K562 (cell line): ENCODE measurements at regions of chr17 and their contacts with region 1.

Region 1: DNA sequence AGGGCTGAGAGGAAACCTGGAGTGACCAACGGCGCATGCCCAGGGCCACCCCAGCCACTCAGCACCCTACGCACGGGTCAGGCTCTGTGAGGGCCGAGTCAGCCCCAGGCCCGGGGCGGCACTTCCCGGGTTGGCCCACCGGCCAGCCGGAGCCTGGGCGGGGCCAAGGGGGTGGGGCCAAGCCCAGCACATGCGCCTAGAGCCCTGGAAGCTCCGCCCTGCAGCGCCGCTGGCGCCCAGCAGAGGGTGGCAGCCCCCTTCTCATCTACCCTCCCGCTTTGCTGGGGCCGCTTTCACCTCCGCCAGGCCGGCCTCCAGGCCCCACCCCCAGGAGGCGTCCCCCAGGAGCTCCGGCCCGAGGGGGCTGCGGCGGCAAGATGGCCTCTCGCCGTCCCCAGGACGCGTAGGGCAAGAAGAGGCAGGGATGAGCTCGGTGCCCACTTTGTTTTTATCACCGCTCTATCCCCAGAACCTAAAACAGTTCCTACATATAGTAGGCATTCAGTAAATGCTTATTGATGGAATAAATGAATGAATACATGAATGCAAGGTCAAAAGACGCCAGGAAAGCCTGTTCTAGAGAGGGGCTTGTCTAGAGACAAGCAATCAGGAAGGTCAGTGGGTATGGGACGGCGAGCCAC is 31.3 kb downstream of the MYO18A start:
- DNase-seq: peak; percentile 94 to 97 (median 96)
- ATAC-seq: peak; percentile 92
- H3K4me3 ChIP-seq: peak overlapping the region; percentile 27
- H3K27ac ChIP-seq: peak overlapping the region; percentile 69
- H3K4me1 ChIP-seq: peaks cover 49 to 63% of the 10 kb centered on the region in 2 experiments
- H3K27me3 ChIP-seq: no peaks in the 10 kb centered on the region
- CTCF ChIP-seq: peak; percentile 95 to 99 (median 98)
- EP300 ChIP-seq: no peak
- POLR2A ChIP-seq: no peak
- RAD21 ChIP-seq: peak; percentile 98

Region 2: GRCh38 chr17:29180034-29180787 is 31.3 kb after region 1 on chr17 and contains the start of gene MYO18A:
- CTCF ChIA-PET with region 1: interaction called, 5 read pairs
- POLR2A ChIA-PET with region 1: interaction called, 6 read pairs
- in situ Hi-C with region 1: loop called (anchors 5 kb)
- intact Hi-C with region 1: loop called (anchors 1 kb)
- DNase-seq: peak; percentile 81 to 86 (median 84)
- ATAC-seq: peak; percentile 72
- H3K4me3 ChIP-seq: peak within 1 kb of the TSS; percentile 49
- H3K27ac ChIP-seq: peak within 1 kb of the TSS; percentile 97
- H3K4me1 ChIP-seq: peaks cover 30 to 45% of the 10 kb centered on the region in 2 experiments
- H3K27me3 ChIP-seq: no peaks in the 10 kb centered on the region
- CTCF ChIP-seq: peak; percentile 87 to 99 (median 98)
- EP300 ChIP-seq: no peak
- POLR2A ChIP-seq: no peak
- RAD21 ChIP-seq: peak; percentile 80 to 92
- polyA plus RNA-seq, gene MYO18A: 2.5 TPM

Region 3: DNA sequence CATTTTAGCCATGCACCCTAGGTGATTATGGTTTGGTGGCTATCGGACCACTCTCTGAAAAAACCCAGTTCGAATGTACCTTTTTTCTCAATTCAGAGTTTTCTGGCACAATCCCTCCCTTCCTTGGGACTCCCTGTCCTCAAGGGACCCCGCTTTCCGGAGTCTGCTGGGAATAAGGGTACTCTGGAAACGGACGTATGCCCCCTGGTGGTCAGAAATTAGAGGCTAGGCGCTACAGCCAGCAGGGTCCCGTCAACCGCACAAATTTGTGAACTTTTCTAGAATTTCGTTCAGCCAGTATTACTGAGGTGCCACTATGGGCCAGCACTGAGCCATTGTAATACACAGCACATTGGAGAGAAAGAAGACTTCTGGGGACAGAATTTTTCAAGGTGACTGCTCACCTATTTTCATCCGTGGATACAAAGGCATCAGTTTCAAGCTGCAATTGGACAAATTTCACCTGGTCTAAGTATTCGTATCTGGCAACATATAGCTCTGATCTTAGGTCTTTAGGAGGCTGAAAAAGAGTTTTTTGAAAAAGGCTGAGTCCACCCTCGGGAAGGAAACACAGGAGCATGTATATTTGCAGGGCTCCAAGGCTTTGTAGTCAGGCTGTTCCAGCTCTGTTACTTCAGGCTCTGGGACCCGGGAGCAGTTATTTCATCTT is 70.6 kb after region 1 on chr17:
- CTCF ChIA-PET with region 1: interaction called, 19 read pairs
- POLR2A ChIA-PET with region 1: no interaction called
- in situ Hi-C with region 1: loop called (anchors 5 kb)
- intact Hi-C with region 1: loop called (anchors 1 kb)
- DNase-seq: peak; percentile 84 to 91 (median 90)
- ATAC-seq: peak; percentile 98
- H3K4me3 ChIP-seq: no peak overlapping the region
- H3K27ac ChIP-seq: no peak overlapping the region
- H3K4me1 ChIP-seq: peaks cover 0 to 3% of the 10 kb centered on the region in 2 experiments; a peak in 1 of 5 replicates
- H3K27me3 ChIP-seq: no peaks in the 10 kb centered on the region
- CTCF ChIP-seq: peak; percentile 97 to 99 (median 98)
- EP300 ChIP-seq: no peak
- POLR2A ChIP-seq: no peak
- RAD21 ChIP-seq: peak; percentile 82 to 90

Region 4: DNA sequence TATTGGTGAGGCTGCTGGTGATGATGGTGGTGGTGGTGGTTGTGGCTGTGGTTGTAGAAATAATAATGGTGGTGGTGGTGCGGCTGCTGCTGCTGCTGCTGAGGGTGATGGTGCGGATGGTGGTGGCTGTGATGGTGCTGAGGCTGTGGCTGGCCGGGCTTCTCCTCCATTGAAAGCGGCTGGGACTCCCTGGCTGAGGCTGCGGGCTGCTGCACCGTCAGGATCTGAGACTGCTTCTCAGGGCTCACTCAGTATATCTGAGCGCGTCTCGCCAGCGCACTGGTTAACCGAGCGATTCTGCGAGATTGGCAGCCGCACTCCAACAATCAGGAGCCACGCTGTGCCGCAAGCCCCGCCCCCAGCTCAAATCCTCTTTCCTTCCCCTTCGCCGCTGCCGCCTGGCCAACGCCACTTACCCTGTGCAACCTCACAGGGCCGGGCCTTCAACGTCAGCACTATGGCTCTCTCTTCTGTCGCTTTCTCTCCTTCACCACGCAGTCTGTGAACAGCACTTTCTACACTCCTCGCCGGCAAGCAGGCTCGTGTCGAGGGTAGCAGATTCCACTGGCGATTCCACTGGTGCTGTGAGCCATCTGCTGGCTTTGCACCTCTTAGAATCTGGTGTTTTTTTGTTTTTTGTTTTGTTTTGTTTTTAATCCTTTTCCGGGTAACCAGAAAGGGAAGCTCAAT is 145.1 kb after region 1 on chr17 and contains the start of gene NUFIP2:
- CTCF ChIA-PET with region 1: interaction called, 15 read pairs
- POLR2A ChIA-PET with region 1: interaction called, 7 read pairs
- in situ Hi-C with region 1: no loop called
- intact Hi-C with region 1: loop called (anchors 1 kb)
- DNase-seq: peak; percentile 85 to 99 (median 92)
- ATAC-seq: peak; percentile 93
- H3K4me3 ChIP-seq: peak within 1 kb of the TSS; percentile 97
- H3K27ac ChIP-seq: peak within 1 kb of the TSS; percentile 92
- H3K4me1 ChIP-seq: peaks cover 10 to 16% of the 10 kb centered on the region in 2 experiments; a peak in 3 of 5 replicates
- H3K27me3 ChIP-seq: no peaks in the 10 kb centered on the region
- CTCF ChIP-seq: peak in 1 of 3 experiments; percentile 28; a peak in 2 of 6 replicates
- EP300 ChIP-seq: peak; percentile 98
- POLR2A ChIP-seq: peak; percentile 99
- RAD21 ChIP-seq: 0 out of 4 replicates have a peak, but pooled peaks of 1 of the 2 experiments have one; percentile 13
- polyA plus RNA-seq, gene NUFIP2: 4.9 to 6.1 TPM

Region 5: GRCh38 chr17:29557085-29557697 is 408.3 kb after region 1 on chr17:
- CTCF ChIA-PET with region 1: no interaction called
- POLR2A ChIA-PET with region 1: interaction called, 3 read pairs
- in situ Hi-C with region 1: no loop called
- intact Hi-C with region 1: loop called (anchors 10 kb)
- DNase-seq: peak in 2 of 4 experiments; percentile 53 to 72
- ATAC-seq: peak; percentile 87
- H3K4me3 ChIP-seq: no peak overlapping the region
- H3K27ac ChIP-seq: no peak overlapping the region
- H3K4me1 ChIP-seq: peaks cover 8 to 9% of the 10 kb centered on the region in 2 experiments; a peak in 4 of 5 replicates
- H3K27me3 ChIP-seq: peaks cover 10 to 20% of the 10 kb centered on the region in 2 experiments; a peak in 4 of 5 replicates
- CTCF ChIP-seq: no peak
- EP300 ChIP-seq: peak; percentile 81
- POLR2A ChIP-seq: no peak
- RAD21 ChIP-seq: no peak

Region 6: DNA sequence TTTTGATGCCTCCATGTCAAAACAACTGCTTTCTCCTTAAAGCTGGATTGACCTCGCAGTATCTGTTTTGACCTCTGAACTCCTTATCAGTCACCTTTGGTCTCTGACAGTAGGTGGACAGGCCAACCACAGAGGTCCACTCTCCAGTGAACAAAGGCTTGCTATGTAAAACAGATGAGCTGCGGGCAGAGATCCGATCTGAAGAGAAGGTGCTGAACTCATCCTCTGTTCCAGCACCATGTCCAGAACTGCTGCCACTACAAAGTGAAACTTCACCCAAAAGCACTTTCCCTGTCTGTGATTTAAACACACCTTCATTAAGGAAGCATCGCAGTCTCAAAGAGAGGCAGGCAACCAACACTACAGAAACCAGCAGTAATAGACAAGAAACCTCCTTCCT is 591.1 kb after region 1 on chr17:
- CTCF ChIA-PET with region 1: no interaction called
- POLR2A ChIA-PET with region 1: no interaction called
- in situ Hi-C with region 1: no loop called
- intact Hi-C with region 1: no loop called
- DNase-seq: peak in 2 of 4 experiments; percentile 32 to 37
- ATAC-seq: no peak
- H3K4me3 ChIP-seq: no peak overlapping the region
- H3K27ac ChIP-seq: no peak overlapping the region
- H3K4me1 ChIP-seq: peaks cover 7% of the 10 kb centered on the region in 2 experiments; a peak in 3 of 5 replicates
- H3K27me3 ChIP-seq: no peaks in the 10 kb centered on the region
- CTCF ChIP-seq: no peak
- EP300 ChIP-seq: no peak
- POLR2A ChIP-seq: no peak
- RAD21 ChIP-seq: no peak